ENCODE measurements at regions of chr4 and their contacts with region 1.

Region 1: DNA sequence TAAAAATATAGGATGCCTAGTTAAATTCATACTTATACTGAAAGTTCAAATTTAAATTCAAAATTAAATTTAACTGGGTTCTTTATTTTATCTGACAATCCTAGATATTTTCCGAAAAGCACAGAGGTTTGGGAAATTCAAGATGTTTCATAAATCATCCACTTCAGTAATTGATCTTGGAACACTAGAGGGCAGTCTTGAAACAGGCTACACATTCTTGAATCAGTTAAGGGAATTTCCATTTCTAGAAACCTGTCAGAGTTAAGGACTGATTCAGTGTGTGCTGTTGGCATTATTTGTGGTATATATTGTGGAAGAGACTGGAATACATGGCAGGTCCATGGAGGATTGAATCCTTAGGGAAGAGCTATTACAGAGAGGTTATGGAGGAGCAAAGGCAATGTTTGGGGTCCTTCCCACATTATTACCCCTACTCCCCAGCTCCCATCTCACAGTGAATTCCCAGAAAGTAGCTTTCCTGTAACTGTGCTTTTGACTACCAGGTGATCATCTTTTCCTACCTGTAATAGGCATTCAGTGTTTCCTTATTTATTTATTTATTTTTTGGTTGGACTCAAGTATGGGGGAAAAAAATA is 92.9 kb downstream of the EGF start:
- DNase-seq: no peak
- ATAC-seq: no peak
- H3K4me3 ChIP-seq: no peak overlapping the region
- H3K27ac ChIP-seq: no peak overlapping the region
- H3K4me1 ChIP-seq: no peaks in the 10 kb centered on the region
- H3K27me3 ChIP-seq: no peaks in the 10 kb centered on the region

Region 2: DNA sequence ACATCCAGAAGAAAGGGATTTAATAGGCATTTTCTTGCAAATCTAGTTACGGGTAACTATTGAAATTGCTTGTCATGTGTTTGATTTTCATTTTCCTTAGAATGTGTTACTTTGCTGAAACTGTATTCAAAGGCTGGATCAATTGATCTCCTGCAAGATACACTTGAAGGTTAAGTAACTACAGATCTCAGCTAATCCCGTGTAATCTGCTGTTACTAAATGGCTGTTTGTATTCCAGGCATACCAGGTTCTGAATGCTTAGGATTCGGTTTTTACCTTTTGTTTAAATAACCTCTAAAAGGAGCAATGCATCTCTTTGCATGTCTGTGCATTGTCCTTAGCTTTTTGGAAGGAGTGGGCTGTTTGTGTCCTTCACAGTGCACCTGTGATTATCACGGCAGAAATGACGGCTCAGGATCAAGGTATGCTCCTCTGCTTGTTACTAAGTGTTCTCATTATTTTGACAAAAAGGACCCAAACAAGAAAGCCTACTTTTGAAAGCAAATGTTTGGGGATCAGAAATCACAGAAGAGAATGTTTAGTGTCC is 157.6 kb before region 1 on chr4 and contains the start of gene LRIT3:
- intact Hi-C with region 1: no loop called
- DNase-seq: no peak
- ATAC-seq: no peak
- H3K4me3 ChIP-seq: no peak within 1 kb of the TSS
- H3K27ac ChIP-seq: no peak within 1 kb of the TSS
- H3K4me1 ChIP-seq: no peaks in the 10 kb centered on the region
- H3K27me3 ChIP-seq: no peaks in the 10 kb centered on the region
- total RNA-seq, gene LRIT3: 0.06 to 0.14 (median 0.10) TPM

Region 3: GRCh38 chr4:110510955-110511544 is 505.5 kb after region 1 on chr4:
- intact Hi-C with region 1: loop called in 2 of 4 experiments (anchors 2 to 10 kb)
- DNase-seq: no peak
- ATAC-seq: peak; percentile 51 to 59
- H3K4me3 ChIP-seq: no peak overlapping the region
- H3K27ac ChIP-seq: no peak overlapping the region
- H3K4me1 ChIP-seq: no peaks in the 10 kb centered on the region
- H3K27me3 ChIP-seq: no peaks in the 10 kb centered on the region

Measured in right cardiac atrium (tissue), 5 donors.